Naive thymus-derived CD8-positive, alpha-beta T cell (primary cell): ENCODE measurements at regions of chr7 and their contacts with region 1.

Region 1: DNA sequence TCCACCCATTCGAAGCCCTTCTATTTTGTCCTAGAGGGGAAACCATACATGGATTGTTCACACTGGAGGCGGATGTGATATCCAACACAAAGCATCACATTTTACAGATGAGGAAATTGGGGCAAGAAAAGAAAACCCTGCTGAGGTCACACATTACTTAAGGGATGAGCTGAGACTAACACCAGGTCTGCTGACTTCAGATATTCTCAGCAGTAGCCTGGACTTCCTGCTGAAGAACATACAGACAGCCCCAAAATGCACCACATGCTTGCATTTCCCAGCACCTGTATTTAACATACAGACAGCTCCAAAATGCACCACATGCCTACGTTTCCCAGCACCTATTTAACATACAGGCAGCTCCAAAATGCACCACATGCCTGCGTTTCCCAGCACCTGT is 11.2 kb downstream of the GIMAP5 start:
- DNase-seq: peak in 1 of 10 donors; percentile 57
- ATAC-seq: peak; percentile 37 to 61
- H3K4me3 Mint-ChIP-seq: peak overlapping the region; percentile 16 to 88 (median 69)
- H3K27ac Mint-ChIP-seq: peak overlapping the region; percentile 89 to 100 (median 95)
- H3K4me1 Mint-ChIP-seq: peaks cover 51 to 93% (median 90%) of the 10 kb centered on the region in 4 donors
- H3K27me3 Mint-ChIP-seq: no peaks in the 10 kb centered on the region

Region 2: GRCh38 chr7:150737265-150738055 is 10.9 kb before region 1 on chr7 and contains the start of gene GIMAP5:
- POLR2A ChIA-PET with region 1: interaction called, 143 read pairs
- DNase-seq: peak in 6 of 10 donors; percentile 27 to 60 (median 40)
- ATAC-seq: peak; percentile 67 to 76
- H3K4me3 Mint-ChIP-seq: peak within 1 kb of the TSS; percentile 88 to 100 (median 98)
- H3K27ac Mint-ChIP-seq: peak within 1 kb of the TSS; percentile 93 to 100 (median 96)
- H3K4me1 Mint-ChIP-seq: peaks cover 48 to 75% (median 68%) of the 10 kb centered on the region in 4 donors
- H3K27me3 Mint-ChIP-seq: no peaks in the 10 kb centered on the region
- polyA plus RNA-seq, gene GIMAP5: 320 to 506 (median 401) TPM